Endothelial cell of umbilical vein (primary cell): ENCODE measurements at regions of chr22 and their contacts with region 1.

Region 1: DNA sequence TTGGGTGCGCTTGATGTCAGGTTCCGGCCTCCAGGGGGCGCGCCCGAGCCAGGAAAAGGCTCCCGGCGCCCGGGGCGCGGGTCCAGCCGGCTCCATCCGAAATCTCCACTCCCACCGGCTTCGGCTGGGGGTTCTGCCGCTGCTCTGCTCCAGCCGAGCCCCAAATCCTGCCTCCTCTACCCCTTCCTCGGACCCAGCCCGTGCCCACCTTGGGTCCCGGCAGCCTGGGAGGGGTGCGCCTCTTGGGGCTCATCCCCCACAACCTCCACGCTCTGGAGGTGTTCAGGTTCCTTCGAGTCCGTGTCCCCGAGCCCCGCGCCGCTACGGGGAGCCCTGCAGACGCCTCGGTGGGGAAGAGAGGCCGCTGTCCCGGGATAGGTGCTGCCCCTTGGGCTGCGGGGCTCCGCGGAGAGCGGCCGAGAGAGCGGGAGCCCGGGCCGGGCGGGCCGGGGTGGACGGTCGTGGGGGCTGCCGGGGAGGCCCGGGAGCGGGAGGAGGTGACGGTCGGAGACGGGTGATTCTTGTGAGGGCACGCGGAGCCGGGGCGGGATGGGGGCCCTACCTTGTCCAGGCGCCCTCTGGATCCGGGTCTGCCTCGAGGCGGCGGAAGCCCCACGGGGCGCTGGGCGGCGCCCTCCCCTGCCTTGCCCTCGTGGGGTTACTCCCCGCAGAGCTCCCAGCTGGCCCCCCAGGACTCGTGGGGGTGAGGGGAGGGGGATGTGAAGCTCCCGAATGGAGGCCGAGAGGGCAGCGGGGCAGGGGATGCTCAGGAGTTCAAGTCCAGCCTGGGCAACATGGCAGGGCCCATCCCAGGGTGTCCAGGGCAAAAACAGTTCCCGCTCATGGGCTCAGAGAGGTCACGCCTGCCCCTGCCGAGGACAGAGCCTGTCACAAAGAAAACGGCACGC is 13.2 kb upstream of the CYB5R3 start:
- DNase-seq: peak; percentile 55
- H3K4me3 ChIP-seq: peak overlapping the region in 2 of 3 experiments; percentile 50 to 52
- H3K27ac ChIP-seq: no peak overlapping the region
- H3K4me1 ChIP-seq: peaks cover 4% of the 10 kb centered on the region
- H3K27me3 ChIP-seq: no peaks in the 10 kb centered on the region
- CTCF ChIP-seq: peak; percentile 85 to 91
- POLR2A ChIP-seq: peak; percentile 67

Region 2: DNA sequence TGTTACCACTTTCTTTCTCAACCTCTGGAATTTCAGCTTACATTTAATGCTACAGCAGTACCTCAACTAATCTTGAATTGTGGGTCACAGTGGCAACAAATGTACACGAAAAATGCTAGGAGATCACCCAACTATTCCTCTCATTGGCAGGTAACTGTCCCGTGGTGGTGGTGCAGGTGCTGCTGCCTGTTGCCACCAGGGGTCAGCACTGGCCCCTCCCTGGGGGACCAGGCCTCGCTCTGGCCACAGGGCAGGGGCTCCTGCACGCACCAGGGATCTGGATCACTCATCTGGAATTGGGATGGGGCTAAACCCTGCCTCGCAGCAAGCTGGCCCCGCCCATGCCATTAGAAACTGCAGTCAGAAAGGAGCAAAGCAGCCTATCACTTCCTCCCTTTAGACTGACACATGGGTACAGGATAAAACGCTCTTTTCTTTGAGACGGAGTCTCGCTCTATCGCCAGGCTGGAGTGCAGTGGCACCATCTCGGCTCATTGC is 40.8 kb before region 1 on chr22:
- CTCF ChIA-PET with region 1: interaction called, 4 read pairs
- POLR2A ChIA-PET with region 1: no interaction called
- dilution Hi-C with region 1: no loop called
- intact Hi-C with region 1: loop called (anchors 1 kb)
- DNase-seq: peak; percentile 51
- H3K4me3 ChIP-seq: no peak overlapping the region
- H3K27ac ChIP-seq: no peak overlapping the region
- H3K4me1 ChIP-seq: no peaks in the 10 kb centered on the region
- H3K27me3 ChIP-seq: no peaks in the 10 kb centered on the region
- CTCF ChIP-seq: peak; percentile 92 to 94
- POLR2A ChIP-seq: no peak

Region 3: GRCh38 chr22:42697542-42698013 is 35.2 kb after region 1 on chr22:
- CTCF ChIA-PET with region 1: interaction called, 5 read pairs
- POLR2A ChIA-PET with region 1: no interaction called
- dilution Hi-C with region 1: no loop called
- intact Hi-C with region 1: loop called (anchors 1 kb)
- DNase-seq: peak; percentile 40
- H3K4me3 ChIP-seq: no peak overlapping the region
- H3K27ac ChIP-seq: no peak overlapping the region
- H3K4me1 ChIP-seq: peaks cover 5% of the 10 kb centered on the region
- H3K27me3 ChIP-seq: no peaks in the 10 kb centered on the region
- CTCF ChIP-seq: no peak
- POLR2A ChIP-seq: no peak

Region 4: GRCh38 chr22:42720263-42721044 is 58.1 kb after region 1 on chr22 and contains the start of gene A4GALT:
- CTCF ChIA-PET with region 1: interaction called, 4 read pairs
- POLR2A ChIA-PET with region 1: no interaction called
- dilution Hi-C with region 1: no loop called
- intact Hi-C with region 1: loop called (anchors 5 kb)
- DNase-seq: no peak
- H3K4me3 ChIP-seq: peak within 1 kb of the TSS; percentile 49 to 65 (median 51)
- H3K27ac ChIP-seq: no peak within 1 kb of the TSS
- H3K4me1 ChIP-seq: peaks cover 11% of the 10 kb centered on the region
- H3K27me3 ChIP-seq: peaks cover 0 to 6% of the 10 kb centered on the region in 2 experiments
- CTCF ChIP-seq: no peak
- POLR2A ChIP-seq: no peak
- total RNA-seq, gene A4GALT: 18.8 and 20.7 TPM in 2 replicates

Region 5: DNA sequence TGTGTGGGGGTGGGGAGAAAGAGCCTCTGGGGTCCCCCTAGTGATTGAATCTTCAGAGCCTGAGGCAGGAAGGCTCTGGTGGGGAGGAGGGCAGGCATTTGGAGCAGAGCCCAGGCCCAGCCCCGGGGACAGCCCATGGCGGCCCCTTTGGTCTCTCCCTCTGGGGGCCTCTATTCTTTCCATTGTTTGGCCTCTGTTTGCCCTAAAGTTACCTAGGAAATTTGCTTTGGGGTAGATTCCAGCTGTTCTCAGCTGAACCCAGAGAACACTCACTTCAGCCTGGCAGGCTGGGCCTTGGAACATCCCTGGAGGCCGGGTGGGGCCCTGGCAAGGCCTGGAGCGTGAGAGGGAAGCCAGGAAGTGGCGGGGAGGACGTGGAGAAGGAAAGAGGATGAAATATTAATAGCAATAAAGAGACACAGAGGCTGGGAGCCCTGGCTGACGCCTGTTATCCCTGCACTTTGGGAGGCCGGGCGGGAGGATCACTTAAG is 81.2 kb after region 1 on chr22:
- CTCF ChIA-PET with region 1: no interaction called
- POLR2A ChIA-PET with region 1: no interaction called
- dilution Hi-C with region 1: no loop called
- intact Hi-C with region 1: no loop called
- DNase-seq: peak; percentile 34
- H3K4me3 ChIP-seq: no peak overlapping the region
- H3K27ac ChIP-seq: no peak overlapping the region
- H3K4me1 ChIP-seq: peaks cover 12% of the 10 kb centered on the region
- H3K27me3 ChIP-seq: no peaks in the 10 kb centered on the region
- CTCF ChIP-seq: no peak
- POLR2A ChIP-seq: no peak

Region 6: GRCh38 chr22:42780070-42780540 is 117.7 kb after region 1 on chr22:
- CTCF ChIA-PET with region 1: interaction called, 4 read pairs
- POLR2A ChIA-PET with region 1: no interaction called
- dilution Hi-C with region 1: no loop called
- intact Hi-C with region 1: loop called (anchors 1 kb)
- DNase-seq: peak; percentile 92
- H3K4me3 ChIP-seq: no peak overlapping the region
- H3K27ac ChIP-seq: no peak overlapping the region
- H3K4me1 ChIP-seq: peaks cover 2% of the 10 kb centered on the region
- H3K27me3 ChIP-seq: no peaks in the 10 kb centered on the region
- CTCF ChIP-seq: peak; percentile 72 to 75
- POLR2A ChIP-seq: no peak

Region 7: GRCh38 chr22:42808521-42808920 is 146.2 kb after region 1 on chr22:
- CTCF ChIA-PET with region 1: no interaction called
- POLR2A ChIA-PET with region 1: no interaction called
- dilution Hi-C with region 1: no loop called
- intact Hi-C with region 1: no loop called
- DNase-seq: no peak
- H3K4me3 ChIP-seq: no peak overlapping the region
- H3K27ac ChIP-seq: no peak overlapping the region
- H3K4me1 ChIP-seq: peaks cover 24% of the 10 kb centered on the region
- H3K27me3 ChIP-seq: no peaks in the 10 kb centered on the region
- CTCF ChIP-seq: no peak
- POLR2A ChIP-seq: no peak

Region 8: GRCh38 chr22:42820066-42820763 is 157.8 kb after region 1 on chr22:
- CTCF ChIA-PET with region 1: interaction called, 23 read pairs
- POLR2A ChIA-PET with region 1: no interaction called
- dilution Hi-C with region 1: no loop called
- intact Hi-C with region 1: loop called (anchors 1 kb)
- DNase-seq: peak; percentile 63
- H3K4me3 ChIP-seq: no peak overlapping the region
- H3K27ac ChIP-seq: no peak overlapping the region
- H3K4me1 ChIP-seq: peaks cover 13% of the 10 kb centered on the region
- H3K27me3 ChIP-seq: no peaks in the 10 kb centered on the region
- CTCF ChIP-seq: peak; percentile 5 to 32
- POLR2A ChIP-seq: no peak

Region 9: GRCh38 chr22:42856865-42857704 is 194.7 kb after region 1 on chr22 and contains the start of gene ARFGAP3:
- CTCF ChIA-PET with region 1: no interaction called
- POLR2A ChIA-PET with region 1: no interaction called
- dilution Hi-C with region 1: no loop called
- intact Hi-C with region 1: loop called (anchors 5 kb)
- DNase-seq: peak; percentile 94
- H3K4me3 ChIP-seq: peak within 1 kb of the TSS; percentile 61 to 81 (median 65)
- H3K27ac ChIP-seq: peak within 1 kb of the TSS; percentile 89
- H3K4me1 ChIP-seq: peaks cover 2% of the 10 kb centered on the region
- H3K27me3 ChIP-seq: no peaks in the 10 kb centered on the region
- CTCF ChIP-seq: no peak
- POLR2A ChIP-seq: peak; percentile 78
- total RNA-seq, gene ARFGAP3: 33.4 and 40.2 TPM in 2 replicates